A549 (cell line): ENCODE measurements at regions of chr12 and their contacts with region 1.

Region 1: GRCh38 chr12:122123051-122123760 is 44.6 kb downstream of the MLXIP start:
- DNase-seq: peak; percentile 76
- ATAC-seq: peak; percentile 67 to 72
- H3K4me3 ChIP-seq: no peak overlapping the region
- H3K27ac ChIP-seq: peak overlapping the region; percentile 58 to 83; a peak in 5 of 6 replicates
- H3K4me1 ChIP-seq: peaks cover 37% of the 10 kb centered on the region
- CTCF ChIP-seq: peak; percentile 92
- EP300 ChIP-seq: no peak
- POLR2A ChIP-seq: no peak
- RAD21 ChIP-seq: peak; percentile 95

Region 2: GRCh38 chr12:121975021-121975420 is 148.2 kb before region 1 on chr12:
- CTCF ChIA-PET with region 1: no interaction called
- POLR2A ChIA-PET with region 1: no interaction called
- DNase-seq: no peak
- ATAC-seq: no peak
- H3K4me3 ChIP-seq: no peak overlapping the region
- H3K27ac ChIP-seq: no peak overlapping the region
- H3K4me1 ChIP-seq: no peaks in the 10 kb centered on the region
- CTCF ChIP-seq: no peak
- EP300 ChIP-seq: no peak
- POLR2A ChIP-seq: no peak
- RAD21 ChIP-seq: no peak

Region 3: DNA sequence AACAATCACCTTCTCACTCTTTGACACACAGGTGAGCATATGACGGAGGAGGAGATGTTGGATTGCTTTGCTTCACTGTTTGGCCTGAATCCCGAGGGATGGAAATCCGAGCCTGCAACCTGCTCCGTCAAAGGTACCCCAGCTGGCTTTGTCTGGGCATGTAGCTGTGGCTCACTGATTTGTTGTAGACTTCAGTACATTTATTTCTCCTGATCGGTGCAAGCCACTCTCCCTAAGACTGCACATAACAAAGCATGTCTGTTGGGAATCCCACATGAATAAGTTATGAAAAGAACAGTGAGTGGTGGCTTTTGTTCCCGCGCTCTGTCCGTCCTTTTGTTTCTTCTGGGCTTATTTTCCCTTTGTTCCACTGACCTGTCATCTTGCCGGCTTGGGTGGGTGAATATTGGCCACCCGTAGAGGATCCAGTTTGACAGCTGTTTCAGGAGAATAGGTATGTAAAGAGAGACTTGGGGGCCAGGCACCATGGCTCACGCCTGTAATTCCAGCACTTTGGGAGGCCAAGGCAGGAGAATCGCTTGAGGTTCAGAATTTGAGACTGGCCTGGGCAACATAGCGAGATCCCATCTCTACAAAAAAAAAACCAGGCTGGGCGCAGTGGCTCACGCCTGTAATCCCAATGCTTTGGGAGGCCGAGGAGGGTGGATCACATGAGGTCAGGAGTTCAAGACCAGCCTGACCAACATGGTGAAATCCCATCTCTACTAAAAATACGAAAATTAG is 121.6 kb before region 1 on chr12:
- CTCF ChIA-PET with region 1: no interaction called
- POLR2A ChIA-PET with region 1: no interaction called
- DNase-seq: no peak
- ATAC-seq: no peak
- H3K4me3 ChIP-seq: no peak overlapping the region
- H3K27ac ChIP-seq: no peak overlapping the region
- H3K4me1 ChIP-seq: peaks cover 7% of the 10 kb centered on the region
- CTCF ChIP-seq: no peak
- EP300 ChIP-seq: no peak
- POLR2A ChIP-seq: no peak
- RAD21 ChIP-seq: no peak

Region 4: GRCh38 chr12:122078141-122079032 is 44.8 kb before region 1 on chr12 and contains the start of gene MLXIP:
- CTCF ChIA-PET with region 1: interaction called, 850 read pairs
- POLR2A ChIA-PET with region 1: interaction called, 4 read pairs
- DNase-seq: peak; percentile 94
- ATAC-seq: peak; percentile 83 to 86
- H3K4me3 ChIP-seq: peak within 1 kb of the TSS; percentile 94
- H3K27ac ChIP-seq: peak within 1 kb of the TSS; percentile 88 to 98
- H3K4me1 ChIP-seq: peaks cover 46% of the 10 kb centered on the region
- CTCF ChIP-seq: no peak
- EP300 ChIP-seq: no peak
- POLR2A ChIP-seq: peak; percentile 67
- RAD21 ChIP-seq: no peak
- polyA plus RNA-seq, gene MLXIP: 7.0 and 11.6 TPM in 2 replicates

Region 5: GRCh38 chr12:122090759-122091515 is 32.3 kb before region 1 on chr12:
- CTCF ChIA-PET with region 1: interaction called, 76 read pairs
- POLR2A ChIA-PET with region 1: no interaction called
- DNase-seq: peak in 1 of 2 experiments; percentile 86
- ATAC-seq: peak; percentile 76
- H3K4me3 ChIP-seq: no peak overlapping the region
- H3K27ac ChIP-seq: peak overlapping the region; percentile 76
- H3K4me1 ChIP-seq: peaks cover 66% of the 10 kb centered on the region
- CTCF ChIP-seq: no peak
- EP300 ChIP-seq: peak; percentile 84 to 87; a peak in 4 of 5 replicates
- POLR2A ChIP-seq: no peak
- RAD21 ChIP-seq: no peak

Region 6: GRCh38 chr12:122107261-122107660 is 15.9 kb before region 1 on chr12:
- CTCF ChIA-PET with region 1: interaction called, 120 read pairs
- POLR2A ChIA-PET with region 1: interaction called, 6 read pairs
- DNase-seq: no peak
- ATAC-seq: peak in 1 of 2 experiments; percentile 25; a peak in 2 of 6 replicates
- H3K4me3 ChIP-seq: no peak overlapping the region
- H3K27ac ChIP-seq: peak overlapping the region; percentile 31 to 56; a peak in 3 of 6 replicates
- H3K4me1 ChIP-seq: peaks cover 48% of the 10 kb centered on the region
- CTCF ChIP-seq: no peak
- EP300 ChIP-seq: no peak
- POLR2A ChIP-seq: no peak
- RAD21 ChIP-seq: no peak

Region 7: DNA sequence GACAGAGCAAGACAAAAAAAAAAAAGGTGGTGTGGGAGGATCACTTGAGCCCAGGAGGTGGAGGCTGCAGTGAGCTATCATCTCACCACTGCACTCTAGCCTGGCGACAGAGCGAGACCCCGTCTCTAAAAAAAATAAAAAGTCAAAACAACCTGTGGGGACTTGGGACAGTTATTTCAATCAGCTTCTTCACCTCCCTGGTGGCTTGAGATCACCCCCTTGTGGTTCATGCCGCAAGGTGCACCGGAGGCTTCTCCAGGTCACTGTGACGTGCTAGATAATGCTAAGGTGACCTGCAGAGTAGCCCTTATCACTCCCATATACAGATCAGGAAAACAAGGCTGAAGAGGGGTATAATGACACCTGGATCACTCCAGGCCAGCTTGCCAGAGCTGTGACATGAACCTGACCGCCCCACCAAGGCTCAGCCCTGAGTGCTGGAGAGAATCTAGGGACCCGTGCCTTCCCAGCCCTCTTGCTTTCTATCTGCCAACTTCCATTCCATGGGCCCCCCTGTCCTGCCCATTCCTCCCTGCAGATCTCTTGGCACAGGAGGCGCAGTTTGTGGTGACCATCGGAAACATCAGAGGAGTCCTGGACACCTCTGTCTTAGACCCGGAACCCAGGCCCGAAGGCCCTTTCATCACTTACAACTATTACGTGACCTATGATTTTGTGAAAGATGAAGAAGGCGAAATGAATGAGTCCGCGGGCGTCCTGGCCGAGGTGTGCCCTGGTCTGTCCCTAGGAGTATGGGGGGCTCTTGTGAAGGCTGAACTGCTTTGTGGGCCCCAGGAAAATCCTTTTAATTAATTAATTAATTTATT is 67.8 kb after region 1 on chr12:
- CTCF ChIA-PET with region 1: interaction called, 117 read pairs
- POLR2A ChIA-PET with region 1: no interaction called
- DNase-seq: peak; percentile 79 to 93
- ATAC-seq: peak; percentile 95
- H3K4me3 ChIP-seq: no peak overlapping the region
- H3K27ac ChIP-seq: no peak overlapping the region
- H3K4me1 ChIP-seq: no peaks in the 10 kb centered on the region
- CTCF ChIP-seq: peak; percentile 71
- EP300 ChIP-seq: no peak
- POLR2A ChIP-seq: no peak
- RAD21 ChIP-seq: peak; percentile 80 to 92

Region 8: DNA sequence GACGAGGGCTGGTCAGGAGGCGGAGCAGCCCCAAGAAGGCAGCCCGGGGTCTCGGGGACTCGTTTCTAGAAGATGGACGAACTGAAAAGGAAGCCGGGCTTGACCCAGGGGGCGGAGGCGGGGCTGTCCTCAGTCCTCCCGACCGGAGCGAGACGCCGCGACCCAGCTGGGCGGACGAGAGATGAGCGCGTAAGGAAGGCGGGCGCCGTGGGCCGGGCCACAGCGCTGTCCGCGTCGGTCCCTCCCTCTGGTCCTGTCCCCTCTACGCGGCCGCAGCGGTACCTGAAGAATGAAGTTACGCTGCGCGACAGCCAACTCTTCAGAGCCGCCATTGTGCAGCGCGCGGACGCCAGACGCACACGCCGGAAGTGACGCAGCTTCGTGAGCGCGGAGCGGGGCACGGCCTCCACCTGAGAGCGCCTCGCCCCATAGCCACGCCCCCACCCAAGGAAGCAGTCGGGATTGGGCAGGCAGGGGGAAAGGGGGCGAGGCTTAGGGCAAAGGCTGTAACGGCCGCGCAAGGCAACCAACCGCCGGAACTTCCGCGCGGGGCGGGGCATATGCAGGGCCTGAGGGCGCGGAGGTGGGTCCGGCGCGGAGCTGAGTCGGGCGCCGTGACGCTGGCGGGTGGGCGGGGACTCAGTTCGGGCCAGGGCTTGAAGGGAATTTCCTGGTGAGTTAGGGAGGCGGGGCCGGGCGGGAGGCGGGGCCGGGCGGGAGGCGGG is 102.6 kb after region 1 on chr12 and contains the start of gene DIABLO:
- CTCF ChIA-PET with region 1: no interaction called
- POLR2A ChIA-PET with region 1: no interaction called
- DNase-seq: peak; percentile 92 to 100
- ATAC-seq: peak; percentile 88 to 93
- H3K4me3 ChIP-seq: peak within 1 kb of the TSS; percentile 63
- H3K27ac ChIP-seq: peak within 1 kb of the TSS; percentile 91 to 95
- H3K4me1 ChIP-seq: peaks cover 15% of the 10 kb centered on the region
- CTCF ChIP-seq: no peak
- EP300 ChIP-seq: no peak
- POLR2A ChIP-seq: peak; percentile 95
- RAD21 ChIP-seq: no peak
- polyA plus RNA-seq, gene DIABLO: 104 and 108 TPM in 2 replicates